Activated T-helper 1 cell treated with anti-CD3 and anti-CD28 coated beads, Interleukin-12 subunit alpha, Interleukin-12 subunit beta, Interleukin-2, Interleukin-4 antibody, amounts not matched to agents 30 ng/mL and 10 ng/mL and 1 ng/mL, durations not matched to agents 14 hours and 24 hours and 36 hours (primary cell): ENCODE measurements at regions of chr11 and their contacts with region 1.

Region 1: DNA sequence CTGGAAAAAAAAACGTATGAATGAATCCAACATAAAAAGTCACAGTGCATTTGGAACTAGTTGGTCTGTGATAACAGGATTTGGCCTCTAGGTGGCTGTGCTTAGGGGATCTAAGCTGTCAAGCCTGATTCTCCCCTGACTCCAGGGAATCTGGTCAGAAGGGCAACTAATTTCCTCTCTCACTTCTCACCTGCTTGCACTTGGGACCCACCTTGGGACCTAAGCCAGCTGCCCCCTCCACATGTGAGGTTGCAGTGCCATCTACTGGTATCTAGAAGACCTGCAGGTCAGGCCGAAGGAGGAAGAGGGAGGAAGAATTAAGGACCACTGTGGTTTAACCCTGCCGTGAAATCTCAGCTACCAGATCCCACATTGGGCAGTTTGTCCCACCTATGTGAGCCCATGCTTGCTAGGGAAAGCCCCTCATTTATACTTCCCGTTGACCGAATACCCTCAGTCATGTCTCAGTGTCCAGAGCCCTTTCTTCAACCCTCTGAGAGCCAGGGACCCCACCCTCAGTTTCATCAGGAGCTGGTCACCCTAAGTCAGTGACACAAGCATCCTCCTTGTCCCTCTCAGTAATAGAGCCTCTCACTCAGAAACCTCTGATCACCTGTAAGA is 33.2 kb upstream of the CAVIN3 start:
- DNase-seq: peak; percentile 47
- H3K4me3 Mint-ChIP-seq: no peak overlapping the region
- H3K27ac Mint-ChIP-seq: no peak overlapping the region
- H3K4me1 Mint-ChIP-seq: peaks cover 12% of the 10 kb centered on the region
- H3K27me3 Mint-ChIP-seq: no peaks in the 10 kb centered on the region

Region 2: GRCh38 chr11:5600374-5600851 is 753.1 kb before region 1 on chr11:
- intact Hi-C with region 1: loop called (anchors 10 kb)
- DNase-seq: peak; percentile 45
- H3K4me3 Mint-ChIP-seq: no peak overlapping the region
- H3K27ac Mint-ChIP-seq: no peak overlapping the region
- H3K4me1 Mint-ChIP-seq: peaks cover 11% of the 10 kb centered on the region
- H3K27me3 Mint-ChIP-seq: peaks cover 1% of the 10 kb centered on the region

Region 3: DNA sequence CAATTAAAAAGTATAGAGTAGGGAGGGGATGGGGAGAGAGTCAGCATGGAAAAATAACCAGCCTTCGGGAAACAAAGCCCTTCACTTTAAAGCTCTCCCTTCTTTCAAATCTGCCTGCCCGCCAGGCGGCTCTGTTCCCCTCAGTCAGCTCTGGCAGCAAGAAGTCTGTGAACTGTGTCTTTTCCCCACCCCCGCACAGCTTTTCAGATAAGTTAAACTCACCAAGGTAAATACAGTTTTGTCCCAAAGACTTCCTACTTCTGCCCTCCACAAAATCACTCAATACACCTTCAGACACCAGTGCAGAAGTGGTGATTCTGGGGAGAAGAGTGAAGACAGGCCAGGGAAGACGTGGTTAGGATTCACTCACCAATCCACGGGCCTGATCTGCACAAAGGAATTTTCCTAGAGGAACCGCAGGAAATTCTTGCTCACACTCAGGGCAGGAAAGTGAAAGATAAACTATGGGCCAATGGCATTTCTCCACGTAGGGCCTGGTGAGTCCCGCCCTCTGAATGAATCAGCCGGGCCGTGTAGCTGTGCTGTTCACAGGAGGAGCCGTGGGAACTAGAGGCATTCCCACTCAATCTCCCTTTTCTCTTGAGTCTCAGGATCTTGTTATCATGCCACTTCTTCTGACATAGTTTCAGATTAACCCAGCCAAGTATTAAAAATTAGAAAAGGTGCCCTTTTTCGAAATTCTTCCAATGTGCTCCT is 668.7 kb before region 1 on chr11 and contains the start of gene TRIM5:
- intact Hi-C with region 1: loop called (anchors 10 kb)
- DNase-seq: peak; percentile 74
- H3K4me3 Mint-ChIP-seq: peak within 1 kb of the TSS; percentile 89
- H3K27ac Mint-ChIP-seq: peak within 1 kb of the TSS; percentile 96
- H3K4me1 Mint-ChIP-seq: peaks cover 57% of the 10 kb centered on the region
- H3K27me3 Mint-ChIP-seq: no peaks in the 10 kb centered on the region
- total RNA-seq, gene TRIM5: 7.9 and 8.6 TPM in 2 replicates

Region 4: GRCh38 chr11:6022956-6023355 is 330.5 kb before region 1 on chr11:
- intact Hi-C with region 1: loop called (anchors 1 kb)
- DNase-seq: peak; percentile 4
- H3K4me3 Mint-ChIP-seq: no peak overlapping the region
- H3K27ac Mint-ChIP-seq: no peak overlapping the region
- H3K4me1 Mint-ChIP-seq: no peaks in the 10 kb centered on the region
- H3K27me3 Mint-ChIP-seq: peaks cover 23% of the 10 kb centered on the region

Region 5: DNA sequence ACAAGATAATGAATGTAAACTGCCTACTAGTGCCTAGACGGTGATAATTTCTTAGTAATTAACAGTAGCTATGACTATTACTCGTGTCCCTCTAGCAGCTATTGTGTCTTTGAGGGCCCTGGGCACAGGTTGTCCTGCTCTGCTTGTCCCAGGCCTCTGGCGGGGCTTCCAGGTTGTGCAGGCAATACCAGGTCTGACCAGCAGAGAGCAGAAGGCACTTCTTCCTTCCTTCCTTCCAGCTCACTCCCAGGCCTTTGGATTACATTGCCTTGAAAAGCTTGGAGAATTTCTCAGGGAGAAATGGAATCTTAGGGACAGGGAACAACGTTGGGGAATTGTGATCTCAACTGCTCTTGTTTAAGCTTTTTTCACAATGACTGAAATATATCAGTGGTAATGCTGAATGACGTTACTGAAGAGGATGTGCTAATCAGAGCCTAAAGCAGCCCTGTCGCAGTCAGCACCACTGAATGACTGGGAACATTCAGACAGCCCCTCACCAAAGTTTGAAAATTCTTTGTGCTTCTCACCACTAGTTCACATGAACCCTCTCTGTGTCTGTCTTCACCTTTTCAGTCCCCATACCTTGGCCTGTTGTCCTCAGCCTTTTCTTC is 102.2 kb before region 1 on chr11:
- intact Hi-C with region 1: loop called (anchors 1 kb)
- DNase-seq: peak; percentile 19
- H3K4me3 Mint-ChIP-seq: no peak overlapping the region
- H3K27ac Mint-ChIP-seq: no peak overlapping the region
- H3K4me1 Mint-ChIP-seq: no peaks in the 10 kb centered on the region
- H3K27me3 Mint-ChIP-seq: peaks cover 10% of the 10 kb centered on the region

Region 6: GRCh38 chr11:6298605-6299004 is 54.9 kb before region 1 on chr11:
- intact Hi-C with region 1: loop called (anchors 1 kb)
- DNase-seq: no peak
- H3K4me3 Mint-ChIP-seq: no peak overlapping the region
- H3K27ac Mint-ChIP-seq: no peak overlapping the region
- H3K4me1 Mint-ChIP-seq: no peaks in the 10 kb centered on the region
- H3K27me3 Mint-ChIP-seq: peaks cover 10% of the 10 kb centered on the region

Region 7: DNA sequence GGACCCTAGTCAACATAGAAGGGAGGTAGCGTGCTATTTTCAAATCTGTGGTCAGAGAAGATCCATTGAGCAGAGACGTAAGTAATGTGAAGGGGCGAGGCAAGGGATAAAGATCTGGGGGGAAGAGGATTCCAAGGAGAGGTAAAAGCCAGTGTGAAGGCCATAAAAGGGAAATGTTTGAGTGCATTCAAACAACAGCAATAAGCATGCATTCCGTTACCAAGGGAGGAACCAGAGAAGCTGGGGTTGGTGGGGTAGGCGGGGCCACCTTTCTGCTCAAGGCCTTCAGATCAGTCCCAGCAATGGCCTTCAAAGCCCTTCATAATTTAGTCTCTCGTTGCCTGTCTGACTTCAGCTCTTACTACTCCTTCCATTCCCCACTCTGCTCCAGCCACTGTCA is 18.3 kb after region 1 on chr11:
- intact Hi-C with region 1: no loop called
- DNase-seq: no peak
- H3K4me3 Mint-ChIP-seq: no peak overlapping the region
- H3K27ac Mint-ChIP-seq: no peak overlapping the region
- H3K4me1 Mint-ChIP-seq: peaks cover 12% of the 10 kb centered on the region
- H3K27me3 Mint-ChIP-seq: no peaks in the 10 kb centered on the region

Region 8: DNA sequence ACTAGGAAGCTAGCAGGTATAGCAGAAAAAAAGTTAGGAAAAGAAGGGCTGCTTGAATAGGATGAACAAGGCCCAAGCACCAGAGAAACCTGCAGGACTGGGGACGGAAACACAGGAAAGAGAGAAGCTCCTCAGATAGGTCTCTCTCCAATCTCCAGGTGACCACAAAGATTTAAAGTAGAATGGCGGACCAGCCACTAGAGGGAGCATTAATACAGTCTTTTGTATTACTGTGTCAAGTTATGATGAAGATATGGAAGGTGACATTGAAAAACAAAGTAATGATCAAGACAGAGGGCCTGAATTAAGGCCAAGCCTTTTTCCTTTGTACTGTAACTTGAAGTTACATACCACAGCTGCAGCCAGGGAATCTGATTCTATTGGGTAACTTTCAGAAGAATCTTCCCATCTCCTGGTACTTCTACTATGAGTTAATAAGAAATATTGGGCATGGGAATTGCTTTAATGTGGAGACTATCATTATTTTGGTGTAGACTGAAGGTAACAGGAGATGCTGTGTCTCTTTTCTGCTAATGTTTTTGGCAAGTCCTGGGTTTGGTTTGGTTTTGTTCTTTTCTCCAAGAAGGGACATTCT is 384.5 kb after region 1 on chr11:
- intact Hi-C with region 1: no loop called
- DNase-seq: peak; percentile 52
- H3K4me3 Mint-ChIP-seq: no peak overlapping the region
- H3K27ac Mint-ChIP-seq: no peak overlapping the region
- H3K4me1 Mint-ChIP-seq: peaks cover 71% of the 10 kb centered on the region
- H3K27me3 Mint-ChIP-seq: no peaks in the 10 kb centered on the region